Brain microvascular endothelial cell (primary cell): ENCODE measurements at regions of chr4 and their contacts with region 1.

Region 1: GRCh38 chr4:108683479-108683878 is 33.1 kb downstream of the OSTC start:
- DNase-seq: peak; percentile 43
- H3K4me3 ChIP-seq: no peak overlapping the region
- H3K27ac ChIP-seq: no peak overlapping the region
- H3K27me3 ChIP-seq: no peaks in the 10 kb centered on the region
- CTCF ChIP-seq: peak; percentile 38

Region 2: GRCh38 chr4:108360754-108361445 is 322.6 kb before region 1 on chr4:
- in situ Hi-C with region 1: no loop called
- DNase-seq: peak; percentile 77
- H3K4me3 ChIP-seq: no peak overlapping the region
- H3K27ac ChIP-seq: peak overlapping the region; percentile 42
- H3K27me3 ChIP-seq: no peaks in the 10 kb centered on the region
- CTCF ChIP-seq: no peak

Region 3: GRCh38 chr4:108544481-108544880 is 139.0 kb before region 1 on chr4:
- in situ Hi-C with region 1: no loop called
- DNase-seq: no peak
- H3K4me3 ChIP-seq: no peak overlapping the region
- H3K27ac ChIP-seq: no peak overlapping the region
- H3K27me3 ChIP-seq: no peaks in the 10 kb centered on the region
- CTCF ChIP-seq: no peak

Region 4: GRCh38 chr4:109406338-109406931 is 723.0 kb after region 1 on chr4:
- in situ Hi-C with region 1: loop called (anchors 25 kb)
- DNase-seq: peak; percentile 54
- H3K4me3 ChIP-seq: no peak overlapping the region
- H3K27ac ChIP-seq: no peak overlapping the region
- H3K27me3 ChIP-seq: no peaks in the 10 kb centered on the region
- CTCF ChIP-seq: peak; percentile 60